ENCODE measurements at regions of chr1 and their contacts with region 1.

Region 1: DNA sequence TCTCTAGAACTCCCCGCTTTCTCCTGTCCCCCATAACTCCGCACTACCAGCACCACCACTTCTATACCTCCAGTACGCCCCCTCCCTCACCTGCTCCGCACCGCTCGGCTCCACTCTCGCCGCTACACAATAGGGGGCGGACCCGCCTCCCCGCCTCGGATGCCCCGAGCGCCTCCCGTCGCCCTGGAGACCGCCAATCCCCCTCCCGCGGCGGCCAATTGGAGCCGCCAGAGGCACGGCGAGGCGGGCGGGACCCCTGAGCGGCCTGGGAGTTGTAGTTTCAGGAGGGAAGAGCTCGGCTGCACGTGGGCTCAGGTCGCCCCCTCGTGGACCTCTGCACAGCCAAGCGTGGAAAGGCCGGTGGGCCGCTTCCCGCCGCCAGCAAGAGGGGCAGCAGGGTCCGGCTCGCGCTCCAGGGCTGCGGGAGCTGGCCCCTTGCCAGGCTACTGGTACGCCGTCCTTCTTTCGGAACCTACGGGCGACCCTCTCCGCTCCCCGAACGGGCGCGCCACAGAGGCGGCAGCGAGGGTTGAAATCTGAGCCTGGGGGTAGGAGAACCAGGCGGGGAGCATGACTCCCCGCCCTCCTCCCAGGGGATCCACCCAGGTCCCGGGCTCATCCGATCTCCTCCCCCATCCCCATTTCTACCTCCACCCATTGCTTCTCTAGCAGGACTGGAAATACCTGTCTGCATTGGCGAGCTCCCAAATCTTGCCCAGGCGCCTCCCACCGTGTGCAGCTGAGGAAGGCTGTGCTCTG is at the start of gene IGSF9:
- DNase-seq: peak; percentile 67 to 92 (median 86)
- ATAC-seq: peak; percentile 97
- H3K4me3 ChIP-seq: peak within 1 kb of the TSS; percentile 13 to 32
- H3K4me3 Mint-ChIP-seq: peak within 1 kb of the TSS; percentile 68
- H3K27ac ChIP-seq: no peak within 1 kb of the TSS
- H3K27ac Mint-ChIP-seq: no peak within 1 kb of the TSS
- H3K4me1 ChIP-seq: peaks cover 12% of the 10 kb centered on the region
- H3K4me1 Mint-ChIP-seq: peaks cover 13% of the 10 kb centered on the region
- H3K27me3 ChIP-seq: peaks cover 5 to 16% of the 10 kb centered on the region in 2 experiments
- H3K27me3 Mint-ChIP-seq: peaks cover 26% of the 10 kb centered on the region
- CTCF ChIP-seq: peak; percentile 67
- total RNA-seq, gene IGSF9: not detected

Region 2: GRCh38 chr1:159161001-159161718 is 784.5 kb before region 1 on chr1:
- CTCF ChIA-PET with region 1: no interaction called
- POLR2A ChIA-PET with region 1: no interaction called
- intact Hi-C with region 1: loop called in 1 of 2 experiments (anchors 5 kb)
- DNase-seq: peak; percentile 28 to 75 (median 63)
- ATAC-seq: peak; percentile 75
- H3K4me3 ChIP-seq: no peak overlapping the region
- H3K4me3 Mint-ChIP-seq: no peak overlapping the region
- H3K27ac ChIP-seq: no peak overlapping the region
- H3K27ac Mint-ChIP-seq: no peak overlapping the region
- H3K4me1 ChIP-seq: no peaks in the 10 kb centered on the region
- H3K4me1 Mint-ChIP-seq: peaks cover 2% of the 10 kb centered on the region
- H3K27me3 ChIP-seq: peaks cover 0 to 4% of the 10 kb centered on the region in 2 experiments
- H3K27me3 Mint-ChIP-seq: peaks cover 47% of the 10 kb centered on the region
- CTCF ChIP-seq: peak; percentile 79

Region 3: GRCh38 chr1:159266832-159267231 is 678.8 kb before region 1 on chr1:
- CTCF ChIA-PET with region 1: no interaction called
- POLR2A ChIA-PET with region 1: no interaction called
- intact Hi-C with region 1: no loop called
- DNase-seq: no peak
- ATAC-seq: no peak
- H3K4me3 ChIP-seq: no peak overlapping the region
- H3K4me3 Mint-ChIP-seq: no peak overlapping the region
- H3K27ac ChIP-seq: no peak overlapping the region
- H3K27ac Mint-ChIP-seq: no peak overlapping the region
- H3K4me1 ChIP-seq: no peaks in the 10 kb centered on the region
- H3K4me1 Mint-ChIP-seq: peaks cover 7% of the 10 kb centered on the region
- H3K27me3 ChIP-seq: no peaks in the 10 kb centered on the region
- H3K27me3 Mint-ChIP-seq: peaks cover 25% of the 10 kb centered on the region
- CTCF ChIP-seq: no peak

Region 4: DNA sequence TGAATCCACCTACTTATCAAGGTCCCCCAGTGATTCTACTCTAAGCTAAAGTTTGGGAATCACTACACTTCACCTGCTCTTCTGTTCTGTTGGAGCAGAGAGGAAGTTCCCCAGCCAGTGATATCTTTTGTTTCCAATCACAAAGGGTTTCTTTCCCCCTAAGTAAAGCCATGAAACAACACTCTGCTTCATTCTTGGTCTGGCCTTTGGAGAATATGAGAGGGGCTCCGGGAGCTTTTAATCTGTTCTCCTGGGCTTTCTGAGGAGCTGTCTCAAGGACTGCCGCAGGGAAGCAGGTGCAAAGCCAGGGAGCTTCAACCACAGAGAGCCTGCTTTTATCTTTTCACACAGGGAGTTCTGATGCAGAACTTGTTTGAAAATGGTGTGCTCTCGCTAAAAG is 18.5 kb after region 1 on chr1:
- CTCF ChIA-PET with region 1: no interaction called
- POLR2A ChIA-PET with region 1: no interaction called
- intact Hi-C with region 1: no loop called
- DNase-seq: no peak
- ATAC-seq: no peak
- H3K4me3 ChIP-seq: no peak overlapping the region
- H3K4me3 Mint-ChIP-seq: no peak overlapping the region
- H3K27ac ChIP-seq: no peak overlapping the region
- H3K27ac Mint-ChIP-seq: no peak overlapping the region
- H3K4me1 ChIP-seq: no peaks in the 10 kb centered on the region
- H3K4me1 Mint-ChIP-seq: no peaks in the 10 kb centered on the region
- H3K27me3 ChIP-seq: no peaks in the 10 kb centered on the region
- H3K27me3 Mint-ChIP-seq: peaks cover 24% of the 10 kb centered on the region
- CTCF ChIP-seq: no peak